ENCODE measurements at regions of chr19 and their contacts with region 1.

Region 1: DNA sequence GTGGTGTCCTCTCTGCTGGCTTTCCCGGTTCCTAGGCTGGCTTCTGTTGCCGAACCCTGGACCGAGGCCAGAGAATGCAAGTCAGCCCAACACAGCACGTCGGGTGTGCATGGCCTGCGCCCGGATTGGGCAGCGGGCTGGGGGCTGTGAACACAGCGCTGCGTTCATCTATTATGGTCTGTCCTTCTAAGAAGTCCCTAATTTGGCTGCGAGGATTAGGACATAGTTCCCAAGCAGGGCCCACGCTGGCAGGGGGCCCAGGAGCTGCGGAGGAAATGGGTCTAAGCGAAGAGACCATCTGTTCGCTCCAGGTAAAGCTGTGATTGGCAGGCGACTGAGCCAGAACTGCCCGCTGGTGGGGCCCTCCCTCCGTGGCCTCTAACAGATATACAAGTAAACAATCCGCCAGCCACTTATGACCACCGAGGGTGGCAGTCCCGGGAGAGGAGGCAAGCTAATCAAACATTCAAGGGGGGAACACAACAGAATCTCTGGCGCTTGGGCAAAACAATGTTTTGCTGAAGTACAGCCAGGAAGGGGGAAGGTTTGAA is 6.0 kb downstream of the SYCE2 start:
- DNase-seq: peak; percentile 77
- H3K4me3 ChIP-seq: no peak overlapping the region
- H3K27ac ChIP-seq: peak overlapping the region in 1 of 2 experiments; percentile 78; a peak in 2 of 4 replicates
- H3K4me1 ChIP-seq: peaks cover 5 to 22% of the 10 kb centered on the region in 2 experiments; a peak in 3 of 4 replicates
- H3K27me3 ChIP-seq: no peaks in the 10 kb centered on the region
- CTCF ChIP-seq: no peak
- EP300 ChIP-seq: no peak
- RAD21 ChIP-seq: no peak

Region 2: GRCh38 chr19:12890787-12891552 is 22.1 kb before region 1 on chr19 and contains the start of gene GCDH:
- CTCF ChIA-PET with region 1: interaction called, 3 read pairs
- POLR2A ChIA-PET with region 1: interaction called, 10 read pairs
- DNase-seq: peak; percentile 96
- H3K4me3 ChIP-seq: peak within 1 kb of the TSS; percentile 80 to 84
- H3K27ac ChIP-seq: no peak within 1 kb of the TSS
- H3K4me1 ChIP-seq: peaks cover 6 to 8% of the 10 kb centered on the region in 2 experiments; a peak in 2 of 4 replicates
- H3K27me3 ChIP-seq: no peaks in the 10 kb centered on the region; the same call in 1 of the 2 replicates
- CTCF ChIP-seq: no peak
- EP300 ChIP-seq: no peak
- RAD21 ChIP-seq: no peak
- polyA plus RNA-seq, gene GCDH: 29.4 and 36.6 TPM in 2 replicates

Measured in SK-N-SH (cell line).